ENCODE measurements at regions of chr12 and their contacts with region 1.

Region 1: DNA sequence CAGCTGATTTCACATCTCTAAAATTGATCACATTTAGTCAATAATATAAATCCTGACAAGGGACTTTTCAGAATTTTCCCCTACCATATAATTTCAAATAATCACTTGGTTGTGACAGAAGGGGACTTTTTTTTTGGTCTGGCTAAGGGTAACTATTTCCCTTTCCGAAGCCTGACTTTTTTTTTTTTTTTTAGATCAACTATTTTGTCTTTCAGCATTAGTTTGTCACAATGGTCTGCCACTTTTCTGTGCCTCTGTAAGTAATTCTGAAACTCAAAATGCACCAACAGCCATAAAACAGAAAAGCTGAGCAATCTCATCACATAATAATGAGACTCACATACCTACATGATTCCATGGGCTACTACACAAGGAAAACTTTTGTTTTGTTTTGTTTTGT is 266.4 kb downstream of the SSPN start:
- DNase-seq: no peak
- H3K4me3 ChIP-seq: no peak overlapping the region
- H3K27ac ChIP-seq: no peak overlapping the region
- H3K4me1 ChIP-seq: no peaks in the 10 kb centered on the region
- H3K27me3 ChIP-seq: no peaks in the 10 kb centered on the region
- CTCF ChIP-seq: no peak
- EP300 ChIP-seq: no peak
- POLR2A ChIP-seq: no peak

Region 2: GRCh38 chr12:27696864-27697564 is 1235.2 kb after region 1 on chr12:
- intact Hi-C with region 1: loop called in 1 of 4 experiments (anchors 5 kb)
- DNase-seq: no peak
- H3K4me3 ChIP-seq: no peak overlapping the region
- H3K27ac ChIP-seq: no peak overlapping the region
- H3K4me1 ChIP-seq: no peaks in the 10 kb centered on the region
- H3K27me3 ChIP-seq: no peaks in the 10 kb centered on the region
- CTCF ChIP-seq: no peak
- EP300 ChIP-seq: no peak
- POLR2A ChIP-seq: no peak

Measured in ovary (tissue), 10 donors.